Activated CD4-positive, alpha-beta T cell treated with anti-CD3 and anti-CD28 coated beads, Interleukin-2, amount 10 ng/mL, durations not matched to agents 24 days and 14 days (primary cell): ENCODE measurements at regions of chr2 and their contacts with region 1.

Region 1: GRCh38 chr2:102114290-102114721 is 28.2 kb upstream of the IL1R1 start:
- DNase-seq: no peak
- H3K4me3 Mint-ChIP-seq: no peak overlapping the region
- H3K27ac Mint-ChIP-seq: no peak overlapping the region
- H3K4me1 Mint-ChIP-seq: peaks cover 23% of the 10 kb centered on the region
- H3K27me3 Mint-ChIP-seq: peaks cover 20% of the 10 kb centered on the region

Region 2: GRCh38 chr2:101900375-101900774 is 213.9 kb before region 1 on chr2:
- intact Hi-C with region 1: loop called (anchors 10 kb)
- DNase-seq: peak; percentile 63
- H3K4me3 Mint-ChIP-seq: no peak overlapping the region
- H3K27ac Mint-ChIP-seq: peak overlapping the region; percentile 60
- H3K4me1 Mint-ChIP-seq: peaks cover 10% of the 10 kb centered on the region
- H3K27me3 Mint-ChIP-seq: no peaks in the 10 kb centered on the region

Region 3: GRCh38 chr2:102103992-102104871 is 10.1 kb before region 1 on chr2:
- intact Hi-C with region 1: loop called (anchors 2 kb)
- DNase-seq: peak; percentile 76
- H3K4me3 Mint-ChIP-seq: peak overlapping the region; percentile 79
- H3K27ac Mint-ChIP-seq: peak overlapping the region; percentile 14
- H3K4me1 Mint-ChIP-seq: peaks cover 22% of the 10 kb centered on the region
- H3K27me3 Mint-ChIP-seq: peaks cover 35% of the 10 kb centered on the region

Region 4: DNA sequence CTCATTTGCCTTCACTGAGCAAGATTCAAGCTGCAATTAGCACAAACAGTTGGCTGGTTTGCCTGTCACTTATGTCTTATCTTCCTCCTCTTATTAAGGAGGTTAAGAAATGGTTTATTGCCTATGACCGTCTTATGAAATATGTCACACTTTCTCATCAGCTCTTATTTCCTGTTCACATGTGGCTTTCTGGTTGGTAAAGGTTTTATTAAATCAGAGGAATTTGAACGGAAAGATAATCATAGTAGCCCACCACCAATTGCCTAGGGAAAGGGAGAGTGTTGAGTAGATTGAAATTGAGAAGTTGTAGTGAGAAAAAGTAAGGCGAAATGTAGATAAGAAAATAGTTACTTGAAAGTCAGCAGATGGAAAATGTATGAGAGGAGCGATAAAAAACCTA is 24.0 kb after region 1 on chr2:
- intact Hi-C with region 1: loop called (anchors 2 kb)
- DNase-seq: no peak
- H3K4me3 Mint-ChIP-seq: no peak overlapping the region
- H3K27ac Mint-ChIP-seq: peak overlapping the region; percentile 1
- H3K4me1 Mint-ChIP-seq: peaks cover 24% of the 10 kb centered on the region
- H3K27me3 Mint-ChIP-seq: peaks cover 31% of the 10 kb centered on the region